ENCODE measurements at regions of chr2 and their contacts with region 1.

Region 1: DNA sequence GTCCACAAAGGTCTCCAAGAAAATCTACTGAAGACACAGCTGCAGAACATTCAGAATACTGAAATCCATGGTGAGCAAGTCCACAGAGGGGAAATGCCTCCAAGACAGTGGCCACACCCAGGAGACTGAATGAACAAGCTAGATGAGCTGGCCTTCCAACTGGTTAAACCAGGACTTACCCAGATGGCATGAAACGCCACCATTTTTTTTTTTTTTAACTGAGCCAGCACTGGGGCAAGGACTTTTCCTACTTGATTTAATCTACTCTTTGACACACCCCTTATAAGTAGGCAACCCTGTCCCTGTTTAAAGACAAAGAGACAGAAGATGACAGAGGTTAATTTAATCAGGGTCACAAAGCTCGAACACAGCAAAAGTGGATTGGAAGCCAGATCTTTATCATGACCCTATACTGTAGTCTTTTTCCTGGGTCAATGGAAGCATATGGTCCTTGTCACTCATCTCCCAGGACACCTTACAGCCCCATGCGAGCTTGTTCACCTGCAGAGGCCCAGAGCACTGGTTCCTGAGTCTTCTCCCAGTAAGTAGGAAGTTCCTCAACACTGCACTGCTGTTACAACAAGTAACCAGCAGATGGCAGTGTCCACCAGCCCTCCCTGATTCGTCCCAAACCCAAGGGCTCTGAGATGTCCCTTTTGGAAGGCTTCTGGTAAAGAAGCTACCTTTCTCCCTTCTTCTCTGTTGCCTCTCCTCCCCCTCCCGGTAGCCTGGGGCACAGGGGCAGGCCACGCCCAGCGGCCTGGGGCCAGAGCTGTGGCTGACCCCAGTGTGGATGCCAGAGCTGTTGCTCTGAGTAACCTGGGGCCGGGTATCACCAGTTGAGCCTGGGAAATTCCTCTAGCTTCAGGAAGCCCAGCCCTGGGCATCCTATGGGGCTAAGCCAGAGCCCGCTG is 5.6 kb upstream of the GDF7 start:
- DNase-seq: peak; percentile 80
- CTCF ChIP-seq: peak; percentile 94

Region 2: GRCh38 chr2:20675701-20676352 is 14.5 kb after region 1 on chr2:
- CTCF ChIA-PET with region 1: interaction called, 135 read pairs
- POLR2A ChIA-PET with region 1: no interaction called
- DNase-seq: no peak
- CTCF ChIP-seq: no peak

Region 3: DNA sequence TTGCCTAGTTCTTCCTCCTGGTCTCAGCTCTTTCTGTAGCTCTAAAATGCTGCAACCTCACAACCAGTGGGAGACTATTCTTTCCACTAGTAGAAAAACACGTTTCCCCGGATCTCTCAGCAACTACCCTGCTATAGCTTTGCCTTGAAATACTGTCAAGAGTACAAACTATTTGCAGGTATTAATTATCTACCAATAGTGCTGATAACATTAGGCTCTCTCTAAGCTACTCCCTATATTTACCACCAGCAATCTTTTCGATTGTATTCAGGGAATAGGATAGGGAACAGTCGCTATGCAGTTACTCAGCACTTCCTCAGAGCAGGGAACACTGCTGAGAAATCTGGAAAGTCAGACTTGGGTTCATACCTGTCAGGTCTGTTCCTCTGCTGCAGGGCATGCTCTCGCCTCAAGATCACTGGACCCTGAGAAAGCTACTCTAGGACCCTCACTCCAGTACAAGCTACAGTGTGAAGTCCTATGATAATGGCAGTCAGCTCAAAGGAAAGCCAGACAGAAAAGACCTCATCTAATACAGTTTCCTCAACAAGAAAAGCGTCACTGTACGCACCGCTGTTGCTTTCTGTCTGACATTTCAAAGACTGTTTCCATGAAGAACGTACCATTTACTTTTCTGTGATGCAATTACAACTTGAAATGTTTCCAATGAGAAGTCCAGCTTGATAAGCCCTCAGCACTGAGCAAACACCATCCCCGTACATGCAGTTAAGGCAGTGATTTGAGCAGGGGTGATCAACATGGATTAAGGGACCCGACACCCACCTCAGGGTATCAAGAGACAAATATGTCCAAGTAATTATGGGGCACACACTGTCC is 28.3 kb after region 1 on chr2:
- CTCF ChIA-PET with region 1: interaction called, 15 read pairs
- POLR2A ChIA-PET with region 1: no interaction called
- DNase-seq: no peak
- CTCF ChIP-seq: no peak

Region 4: DNA sequence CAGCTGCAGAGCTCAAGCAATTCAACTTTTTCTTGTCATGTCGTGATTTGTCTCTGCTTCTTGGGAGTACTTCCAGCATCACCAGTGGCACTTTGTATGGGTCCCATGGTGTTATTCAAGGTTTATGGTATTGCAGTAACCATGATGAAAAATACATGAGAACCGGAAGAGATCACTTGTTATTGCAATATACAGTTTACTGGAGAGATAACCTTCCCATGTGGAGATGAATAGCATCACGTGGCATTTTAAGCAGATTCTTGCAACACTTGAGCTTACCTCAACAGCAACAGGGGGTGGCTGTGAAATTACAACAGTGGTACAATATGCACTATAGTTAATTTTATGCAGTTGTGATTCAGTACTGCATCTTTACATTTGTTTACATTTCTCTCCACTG is 285.1 kb after region 1 on chr2:
- CTCF ChIA-PET with region 1: interaction called, 10 read pairs
- POLR2A ChIA-PET with region 1: no interaction called
- DNase-seq: no peak
- CTCF ChIP-seq: no peak

Region 5: GRCh38 chr2:20962939-20963557 is 301.7 kb after region 1 on chr2:
- CTCF ChIA-PET with region 1: interaction called, 247 read pairs
- POLR2A ChIA-PET with region 1: no interaction called
- DNase-seq: peak; percentile 63
- CTCF ChIP-seq: peak; percentile 92

Region 6: DNA sequence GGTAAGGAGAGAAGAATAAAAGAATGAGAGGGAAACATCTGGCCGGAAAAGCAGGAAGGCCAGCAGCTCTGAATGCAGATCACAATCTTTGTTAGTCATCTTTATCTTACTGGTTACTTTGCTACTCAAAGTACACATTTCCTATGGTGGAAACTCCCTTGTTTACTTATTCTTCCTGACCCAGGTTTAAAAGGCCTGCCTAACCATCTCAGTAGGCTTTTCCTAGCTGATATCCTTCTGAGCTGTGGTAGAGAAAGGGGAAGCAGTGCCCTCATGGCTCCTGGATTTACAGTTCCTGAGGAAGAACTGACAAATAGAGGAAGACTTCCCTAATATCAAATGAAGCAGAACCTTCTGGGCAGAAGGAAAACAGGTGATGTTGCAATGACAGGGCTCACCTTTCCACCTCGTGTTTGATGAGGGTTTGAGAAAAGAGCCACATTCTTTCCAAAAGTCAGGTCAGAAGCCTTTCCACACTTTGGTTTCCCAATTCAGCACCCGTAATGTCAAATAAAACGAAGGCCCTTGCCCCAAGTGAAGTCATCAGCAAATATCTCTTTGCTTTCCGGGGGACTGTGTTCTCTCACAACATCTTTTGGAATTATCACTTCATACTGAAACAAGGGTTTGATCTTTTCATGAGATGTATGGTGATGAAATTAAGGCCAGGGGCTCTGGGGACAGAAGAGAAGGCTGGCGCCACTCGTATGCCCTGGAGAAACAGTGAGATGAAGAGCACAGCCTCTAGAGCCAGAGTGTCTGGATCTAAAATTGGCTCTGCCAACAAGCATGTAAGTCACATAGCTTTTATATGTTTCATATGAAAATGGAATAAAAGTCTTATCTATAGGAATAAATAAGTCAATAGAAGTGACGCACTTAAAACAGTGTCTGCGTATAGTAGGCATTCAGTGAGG is 409.3 kb after region 1 on chr2:
- CTCF ChIA-PET with region 1: no interaction called
- POLR2A ChIA-PET with region 1: no interaction called
- DNase-seq: no peak
- CTCF ChIP-seq: no peak

Measured in GM10248 (cell line).